Activated CD8-positive, alpha-beta T cell treated with anti-CD3 and anti-CD28 coated beads, Interleukin-2, amount 10 ng/mL, durations not matched to agents 7 days and 5 days (primary cell): ENCODE measurements at regions of chr14 and their contacts with region 1.

Region 1: GRCh38 chr14:61296719-61297502 is 15.8 kb upstream of the TMEM30B start:
- DNase-seq: peak; percentile 50
- ATAC-seq: peak; percentile 50
- H3K4me3 Mint-ChIP-seq: peak overlapping the region; percentile 53
- H3K27ac Mint-ChIP-seq: no peak overlapping the region
- H3K4me1 Mint-ChIP-seq: peaks cover 47% of the 10 kb centered on the region
- H3K27me3 Mint-ChIP-seq: no peaks in the 10 kb centered on the region

Region 2: GRCh38 chr14:60926002-60926401 is 370.9 kb before region 1 on chr14:
- CTCF ChIA-PET with region 1: no interaction called
- POLR2A ChIA-PET with region 1: no interaction called
- DNase-seq: no peak
- ATAC-seq: no peak
- H3K4me3 Mint-ChIP-seq: no peak overlapping the region
- H3K27ac Mint-ChIP-seq: no peak overlapping the region
- H3K4me1 Mint-ChIP-seq: no peaks in the 10 kb centered on the region
- H3K27me3 Mint-ChIP-seq: no peaks in the 10 kb centered on the region

Region 3: DNA sequence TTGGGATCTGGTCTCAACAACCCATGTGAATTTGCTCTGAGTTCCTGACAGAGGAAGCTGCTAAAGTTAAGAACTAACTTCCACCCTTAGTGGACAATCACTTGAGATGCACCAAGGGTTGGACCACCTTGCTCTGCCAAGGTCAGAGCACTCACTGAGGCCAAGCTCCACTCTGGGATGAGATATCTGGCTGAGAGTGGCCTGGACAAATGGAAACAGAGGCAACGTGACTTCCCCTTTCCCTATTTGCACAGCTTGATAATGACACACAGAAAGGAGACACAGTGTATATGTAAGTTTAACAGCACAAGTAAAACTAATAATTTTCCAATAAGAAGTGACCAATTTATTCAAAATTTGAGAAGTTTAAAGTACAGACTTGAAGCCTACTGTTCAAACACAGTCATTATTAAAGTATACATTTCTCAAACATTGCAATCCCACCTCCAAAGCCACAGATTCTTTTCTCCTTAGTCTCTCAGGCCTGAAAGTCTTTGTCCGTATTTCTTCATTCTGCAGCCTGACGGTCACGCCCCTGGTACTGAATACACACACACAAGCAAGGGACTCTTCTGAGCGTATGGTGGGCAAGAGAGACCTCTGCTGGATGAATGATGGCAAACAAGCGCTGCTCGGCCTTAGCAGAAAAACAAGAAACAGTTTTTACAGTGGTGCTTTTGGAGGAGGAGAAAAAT is 44.4 kb before region 1 on chr14:
- CTCF ChIA-PET with region 1: no interaction called
- POLR2A ChIA-PET with region 1: no interaction called
- DNase-seq: peak; percentile 74
- ATAC-seq: peak; percentile 95
- H3K4me3 Mint-ChIP-seq: no peak overlapping the region
- H3K27ac Mint-ChIP-seq: no peak overlapping the region
- H3K4me1 Mint-ChIP-seq: peaks cover 11% of the 10 kb centered on the region
- H3K27me3 Mint-ChIP-seq: peaks cover 21% of the 10 kb centered on the region

Region 4: GRCh38 chr14:61403411-61403810 is 106.5 kb after region 1 on chr14:
- CTCF ChIA-PET with region 1: interaction called, 11 read pairs
- POLR2A ChIA-PET with region 1: no interaction called
- DNase-seq: peak; percentile 63
- ATAC-seq: peak; percentile 83
- H3K4me3 Mint-ChIP-seq: peak overlapping the region; percentile 67
- H3K27ac Mint-ChIP-seq: peak overlapping the region; percentile 92
- H3K4me1 Mint-ChIP-seq: peaks cover 89% of the 10 kb centered on the region
- H3K27me3 Mint-ChIP-seq: no peaks in the 10 kb centered on the region